Heart right ventricle (tissue), 16 donors: ENCODE measurements at regions of chr12 and their contacts with region 1.

Region 1: GRCh38 chr12:49288412-49288853 is 6.5 kb upstream of the PRPH start:
- DNase-seq: no peak
- ATAC-seq: peak in 5 of 8 donors; percentile 45 to 66 (median 53)
- H3K4me3 ChIP-seq: no peak overlapping the region
- H3K27ac ChIP-seq: no peak overlapping the region
- H3K4me1 ChIP-seq: peaks cover 5 to 12% (median 8%) of the 10 kb centered on the region in 9 donors
- H3K27me3 ChIP-seq: peaks cover 0 to 48% (median 28%) of the 10 kb centered on the region in 7 donors
- CTCF ChIP-seq: peak; percentile 61 to 90 (median 86)

Region 2: GRCh38 chr12:49342066-49342913 is 53.9 kb after region 1 on chr12:
- intact Hi-C with region 1: loop called in 9 of 10 experiments (anchors 2 to 10 kb)
- DNase-seq: peak; percentile 68 to 78
- ATAC-seq: peak; percentile 42 to 68 (median 58)
- H3K4me3 ChIP-seq: peak overlapping the region; percentile 32 to 58 (median 54)
- H3K27ac ChIP-seq: no peak overlapping the region
- H3K4me1 ChIP-seq: peaks cover 28 to 53% (median 46%) of the 10 kb centered on the region in 9 donors
- H3K27me3 ChIP-seq: peaks cover 15 to 98% (median 81%) of the 10 kb centered on the region in 7 donors
- CTCF ChIP-seq: peak; percentile 74 to 91 (median 83)

Region 3: DNA sequence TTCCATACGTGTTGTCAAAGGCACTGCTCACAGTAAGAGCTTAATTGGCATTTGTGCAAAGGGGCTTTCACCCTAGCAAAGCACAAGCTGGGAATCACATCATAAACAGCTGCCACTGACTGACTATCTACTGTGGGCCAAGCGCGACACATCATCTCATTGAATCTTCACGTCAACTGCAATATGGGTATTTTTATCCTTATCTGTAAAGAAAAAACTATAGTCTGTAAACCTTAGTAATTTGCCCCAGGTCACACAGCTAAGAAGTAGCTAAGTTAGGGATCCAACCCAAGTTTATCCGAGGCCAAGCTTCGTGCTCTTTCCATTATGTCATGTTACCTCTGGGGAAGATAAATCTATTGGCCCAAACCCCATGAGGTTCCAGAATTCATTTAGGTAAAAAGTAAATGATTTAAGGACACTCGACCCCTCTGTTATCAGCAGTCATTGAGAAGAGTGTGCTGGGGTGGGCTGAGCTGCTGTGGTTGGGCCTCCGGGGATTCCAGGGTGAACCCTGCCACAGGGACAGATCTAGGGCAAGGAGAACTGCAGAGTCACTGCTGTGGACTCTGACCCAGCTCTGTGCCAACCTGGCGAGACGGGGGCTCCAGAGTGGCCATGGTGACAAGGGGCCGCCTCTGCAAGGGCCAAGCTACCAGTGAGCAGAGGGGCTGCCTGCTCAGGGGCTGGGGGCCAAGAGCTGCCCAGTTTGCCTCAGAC is 512.1 kb after region 1 on chr12:
- intact Hi-C with region 1: no loop called
- DNase-seq: no peak
- ATAC-seq: peak in 7 of 8 donors; percentile 49 to 74 (median 60)
- H3K4me3 ChIP-seq: no peak overlapping the region
- H3K27ac ChIP-seq: peak overlapping the region; percentile 3 to 83 (median 60)
- H3K4me1 ChIP-seq: peaks cover 2 to 24% (median 18%) of the 10 kb centered on the region in 9 donors
- H3K27me3 ChIP-seq: no peaks in the 10 kb centered on the region
- CTCF ChIP-seq: no peak

Region 4: DNA sequence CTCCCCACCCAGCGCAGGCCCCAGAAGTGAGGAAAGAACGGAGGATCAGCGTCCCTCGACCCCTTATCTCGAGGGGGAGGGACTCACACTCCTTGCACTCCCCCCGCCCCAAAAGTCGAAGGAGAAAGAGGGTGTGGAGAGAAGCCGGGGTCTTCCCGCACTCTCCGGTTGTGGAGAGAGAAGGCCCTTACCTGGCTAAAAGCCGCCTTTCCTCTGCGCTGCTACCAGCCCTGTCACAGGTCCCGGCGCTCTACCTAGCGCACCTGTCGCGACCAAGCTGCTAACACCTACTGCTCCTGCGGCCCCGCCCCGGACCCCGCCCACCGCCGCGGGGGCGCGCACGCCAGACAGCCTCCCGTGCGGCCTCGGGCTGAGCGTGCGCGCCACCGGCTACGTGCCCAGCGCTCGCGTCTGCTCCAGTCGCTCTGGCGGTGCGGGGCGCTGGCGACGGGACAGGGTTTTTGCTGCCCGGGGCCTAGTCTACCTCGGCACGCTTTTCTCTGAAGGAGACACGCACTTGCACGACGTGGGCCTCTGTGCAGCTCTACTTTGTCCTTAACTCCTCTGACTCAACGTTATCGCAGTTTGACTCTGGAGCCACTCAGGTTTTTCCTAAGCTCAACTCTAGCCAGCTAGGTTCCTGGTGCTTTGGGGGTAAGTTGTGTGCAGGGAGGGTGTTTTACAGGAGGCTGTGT is 994.9 kb after region 1 on chr12 and contains the start of gene LIMA1:
- intact Hi-C with region 1: no loop called
- DNase-seq: peak; percentile 90 to 93
- ATAC-seq: peak; percentile 99 to 100 (median 100)
- H3K4me3 ChIP-seq: peak within 1 kb of the TSS; percentile 70 to 97 (median 94)
- H3K27ac ChIP-seq: peak within 1 kb of the TSS; percentile 42 to 92 (median 85)
- H3K4me1 ChIP-seq: peaks cover 0 to 40% (median 26%) of the 10 kb centered on the region in 9 donors
- H3K27me3 ChIP-seq: no peaks in the 10 kb centered on the region
- CTCF ChIP-seq: peak in 4 of 9 donors; percentile 27 to 55 (median 52)
- total RNA-seq, gene LIMA1: 13.8 to 26.0 (median 16.2) TPM